ENCODE measurements at regions of chr17 and their contacts with region 1.

Region 1: DNA sequence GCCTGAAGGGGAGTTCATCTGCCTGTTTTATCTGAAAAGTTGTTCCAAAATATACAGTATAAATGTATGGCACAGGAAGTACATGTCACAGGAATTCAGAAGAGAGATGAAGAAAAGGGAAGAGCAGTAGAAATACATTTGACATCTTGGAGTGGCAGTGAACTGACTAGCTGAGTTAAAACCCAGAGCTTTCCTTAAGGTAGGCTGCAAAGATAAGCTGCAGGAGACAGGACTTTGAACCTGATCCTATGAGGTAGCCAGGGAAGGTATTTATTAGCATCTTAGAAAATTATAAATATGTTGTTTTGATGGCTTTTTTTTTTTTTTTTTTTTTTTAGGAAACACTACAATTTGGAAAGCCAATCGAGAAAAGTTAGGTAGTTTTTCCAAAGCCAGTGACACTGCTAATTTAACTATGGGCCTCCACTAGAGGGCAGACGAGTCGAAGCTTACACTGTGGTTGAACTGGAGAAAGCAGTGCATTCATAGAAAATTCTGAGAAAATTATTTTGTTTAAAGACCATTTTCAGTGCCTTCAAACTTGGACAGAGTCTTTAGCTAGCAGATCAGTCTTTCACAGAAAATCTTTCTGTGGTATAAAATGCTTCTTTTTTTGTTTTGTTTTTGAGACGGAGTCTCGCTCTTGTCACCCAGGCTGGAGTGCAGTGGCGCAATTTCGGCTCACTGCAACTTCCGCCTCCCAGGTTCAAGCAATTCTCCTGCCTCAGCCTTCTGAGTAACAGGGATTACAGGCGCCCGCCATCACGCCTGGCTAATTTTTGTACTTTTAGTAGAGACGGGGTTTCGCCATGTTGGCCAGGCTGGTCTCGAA is 122.3 kb downstream of the SSH2 start:
- DNase-seq: peak; percentile 82
- H3K4me3 ChIP-seq: no peak overlapping the region
- H3K27ac ChIP-seq: no peak overlapping the region
- H3K4me1 ChIP-seq: no peaks in the 10 kb centered on the region
- H3K27me3 ChIP-seq: no peaks in the 10 kb centered on the region
- CTCF ChIP-seq: peak; percentile 62 to 77 (median 68)
- POLR2A ChIP-seq: no peak

Region 2: GRCh38 chr17:29929533-29930408 is 122.0 kb after region 1 on chr17 and contains the start of gene SSH2:
- intact Hi-C with region 1: loop called (anchors 10 kb)
- DNase-seq: peak; percentile 90
- H3K4me3 ChIP-seq: peak within 1 kb of the TSS; percentile 94 to 98
- H3K27ac ChIP-seq: peak within 1 kb of the TSS; percentile 83 to 91
- H3K4me1 ChIP-seq: peaks cover 10% of the 10 kb centered on the region
- H3K27me3 ChIP-seq: no peaks in the 10 kb centered on the region
- CTCF ChIP-seq: no peak
- POLR2A ChIP-seq: no peak
- total RNA-seq, gene SSH2: 31.0 to 37.4 TPM

Region 3: DNA sequence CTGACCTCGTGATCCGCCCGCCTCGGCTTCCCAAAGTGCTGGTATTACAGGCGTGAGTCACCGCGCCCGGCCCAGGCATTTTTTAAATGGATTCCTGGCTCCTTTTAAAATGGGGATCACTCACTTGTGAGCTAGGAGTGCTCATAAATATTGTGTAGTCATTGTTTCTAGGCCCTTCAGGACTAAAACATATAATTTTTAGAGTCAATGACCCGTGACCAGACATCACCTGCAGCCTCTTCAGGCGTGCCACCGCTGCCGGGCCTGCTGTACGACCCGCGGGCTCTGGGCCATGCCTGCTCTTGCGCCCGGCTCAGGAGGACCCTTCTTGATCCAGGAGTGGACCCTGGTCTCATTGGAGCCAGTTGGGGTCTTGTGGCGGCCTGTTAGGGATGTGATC is 164.5 kb after region 1 on chr17:
- intact Hi-C with region 1: no loop called
- DNase-seq: no peak
- H3K4me3 ChIP-seq: no peak overlapping the region
- H3K27ac ChIP-seq: no peak overlapping the region
- H3K4me1 ChIP-seq: no peaks in the 10 kb centered on the region
- H3K27me3 ChIP-seq: no peaks in the 10 kb centered on the region
- CTCF ChIP-seq: no peak
- POLR2A ChIP-seq: no peak